PC-3 (cell line): ENCODE measurements at regions of chr3 and their contacts with region 1.

Region 1: GRCh38 chr3:96300743-96301142 is 513.7 kb upstream of the EPHA6 start:
- DNase-seq: no peak
- ATAC-seq: no peak
- H3K4me3 ChIP-seq: no peak overlapping the region
- H3K27ac ChIP-seq: no peak overlapping the region
- H3K4me1 ChIP-seq: no peaks in the 10 kb centered on the region
- H3K27me3 ChIP-seq: no peaks in the 10 kb centered on the region
- CTCF ChIP-seq: no peak

Region 2: GRCh38 chr3:96022676-96023075 is 278.1 kb before region 1 on chr3:
- CTCF ChIA-PET with region 1: no interaction called
- POLR2A ChIA-PET with region 1: no interaction called
- intact Hi-C with region 1: loop called (anchors 10 kb)
- DNase-seq: peak; percentile 6
- ATAC-seq: 0 out of 2 replicates have a peak, but pooled peaks have one; percentile 24
- H3K4me3 ChIP-seq: no peak overlapping the region
- H3K27ac ChIP-seq: no peak overlapping the region
- H3K4me1 ChIP-seq: no peaks in the 10 kb centered on the region
- H3K27me3 ChIP-seq: no peaks in the 10 kb centered on the region
- CTCF ChIP-seq: peak; percentile 42

Region 3: DNA sequence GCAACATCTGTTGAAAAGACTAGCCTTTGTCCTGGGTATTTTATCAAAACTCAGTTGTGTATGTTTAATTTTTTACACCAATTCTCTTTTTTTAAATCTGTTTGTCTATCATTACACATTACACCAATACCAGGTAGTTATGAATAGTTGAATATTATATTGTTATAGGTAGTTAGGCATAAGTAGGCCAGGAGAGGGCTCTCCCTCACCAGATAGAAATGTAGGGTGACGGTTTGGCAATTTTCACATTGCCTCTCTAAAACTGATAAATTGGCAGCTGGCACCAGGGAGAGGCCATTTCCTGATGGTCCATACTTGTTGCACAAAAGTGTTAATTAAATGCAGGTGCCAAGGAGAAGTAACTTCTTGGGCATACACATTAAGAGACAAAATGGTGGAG is 30.6 kb after region 1 on chr3:
- CTCF ChIA-PET with region 1: no interaction called
- POLR2A ChIA-PET with region 1: no interaction called
- intact Hi-C with region 1: no loop called
- DNase-seq: peak; percentile 59
- ATAC-seq: peak; percentile 75
- H3K4me3 ChIP-seq: no peak overlapping the region
- H3K27ac ChIP-seq: no peak overlapping the region
- H3K4me1 ChIP-seq: peaks cover 6% of the 10 kb centered on the region; the same call in 1 of the 2 replicates
- H3K27me3 ChIP-seq: no peaks in the 10 kb centered on the region
- CTCF ChIP-seq: peak; percentile 75